MCF 10A (cell line): ENCODE measurements at regions of chr10 and their contacts with region 1.

Region 1: GRCh38 chr10:128875956-128876736 is 590.9 kb upstream of the MGMT start:
- DNase-seq: peak; percentile 88
- H3K4me3 Mint-ChIP-seq: no peak overlapping the region
- H3K27ac Mint-ChIP-seq: peak overlapping the region; percentile 78
- H3K4me1 Mint-ChIP-seq: peaks cover 6% of the 10 kb centered on the region
- H3K27me3 Mint-ChIP-seq: no peaks in the 10 kb centered on the region
- CTCF ChIP-seq: no peak

Region 2: DNA sequence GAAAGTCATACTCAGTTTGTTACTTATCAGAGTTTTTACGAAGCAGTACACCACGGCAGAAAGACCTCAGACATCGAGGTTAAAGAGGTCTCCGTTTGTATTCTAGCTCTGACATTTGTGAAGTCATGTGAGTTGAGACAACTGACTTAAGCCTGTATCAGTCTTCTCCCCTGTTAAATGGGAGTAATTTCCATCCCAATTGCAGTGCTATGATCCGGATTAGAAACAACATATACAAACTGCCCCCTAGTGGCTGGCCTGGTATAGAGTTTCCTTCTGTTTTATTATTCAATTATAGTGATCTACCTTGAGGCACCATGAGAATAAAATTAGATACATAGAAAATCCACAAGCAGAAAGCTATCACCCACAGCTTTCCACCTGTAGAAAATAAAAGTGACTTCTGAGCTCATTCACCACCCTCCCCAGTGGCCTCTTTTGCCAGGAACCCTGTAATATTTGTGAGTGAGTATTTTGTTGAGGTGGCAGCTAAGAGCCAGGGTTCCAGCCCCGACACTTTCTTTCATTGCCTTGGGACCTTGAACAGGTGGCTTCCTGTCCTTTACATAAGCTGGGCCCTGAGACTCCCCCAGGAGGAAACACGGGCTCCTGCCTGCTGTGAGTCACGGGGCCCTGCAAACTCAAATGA is 16.3 kb before region 1 on chr10:
- CTCF ChIA-PET with region 1: interaction called, 16 read pairs
- POLR2A ChIA-PET with region 1: no interaction called
- intact Hi-C with region 1: no loop called
- DNase-seq: peak; percentile 63
- H3K4me3 Mint-ChIP-seq: no peak overlapping the region
- H3K27ac Mint-ChIP-seq: no peak overlapping the region
- H3K4me1 Mint-ChIP-seq: peaks cover 3% of the 10 kb centered on the region
- H3K27me3 Mint-ChIP-seq: no peaks in the 10 kb centered on the region
- CTCF ChIP-seq: peak; percentile 40

Region 3: DNA sequence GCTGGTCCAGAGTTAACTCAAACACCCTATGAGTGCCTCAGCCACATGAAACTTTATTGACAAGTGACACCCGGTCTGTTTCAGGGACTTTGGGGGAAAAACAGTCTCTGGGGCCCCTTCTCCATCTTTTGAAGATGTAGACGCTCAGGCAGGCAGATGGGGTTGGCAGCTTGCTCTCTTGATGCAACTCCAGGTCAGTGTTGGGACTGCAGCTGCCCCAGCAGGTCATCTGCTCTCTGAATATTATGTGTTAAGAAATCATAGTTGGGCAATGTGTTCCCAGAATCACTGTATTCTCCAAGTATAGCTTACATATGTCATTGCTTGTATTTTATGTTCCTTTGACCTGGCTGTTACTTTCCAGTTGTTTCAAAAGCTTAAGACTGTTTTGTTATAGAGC is 46.0 kb after region 1 on chr10:
- CTCF ChIA-PET with region 1: interaction called, 3 read pairs
- POLR2A ChIA-PET with region 1: no interaction called
- intact Hi-C with region 1: loop called (anchors 5 kb)
- DNase-seq: peak; percentile 80
- H3K4me3 Mint-ChIP-seq: no peak overlapping the region
- H3K27ac Mint-ChIP-seq: peak overlapping the region; percentile 58
- H3K4me1 Mint-ChIP-seq: no peaks in the 10 kb centered on the region
- H3K27me3 Mint-ChIP-seq: no peaks in the 10 kb centered on the region
- CTCF ChIP-seq: no peak